PC-9 (cell line): ENCODE measurements at regions of chr17 and their contacts with region 1.

Region 1: DNA sequence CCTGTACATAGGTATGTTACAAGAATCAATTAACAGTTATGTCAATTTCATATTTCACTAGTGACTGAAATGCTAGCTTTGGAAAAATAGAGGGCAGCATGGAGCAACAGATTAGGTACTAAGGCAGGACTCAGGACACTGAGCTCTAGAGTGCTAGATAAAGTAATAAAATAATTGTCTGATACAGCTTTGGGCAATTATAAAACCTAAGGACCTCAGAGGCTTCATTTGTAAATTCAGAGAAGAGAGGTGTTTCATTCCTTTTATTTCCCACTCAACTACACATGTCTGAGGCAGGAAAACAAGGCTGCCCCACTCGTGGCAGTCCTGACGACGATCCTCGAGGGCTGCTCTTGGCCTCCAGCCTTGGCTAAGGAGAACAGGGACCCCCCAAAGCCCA is 81.5 kb downstream of the CA4 start:
- DNase-seq: no peak
- H3K4me3 ChIP-seq: no peak overlapping the region
- H3K27ac ChIP-seq: no peak overlapping the region
- H3K4me1 ChIP-seq: no peaks in the 10 kb centered on the region
- H3K27me3 ChIP-seq: no peaks in the 10 kb centered on the region
- CTCF ChIP-seq: peak; percentile 67

Region 2: GRCh38 chr17:60129170-60129569 is 102.1 kb before region 1 on chr17:
- CTCF ChIA-PET with region 1: interaction called, 10 read pairs
- POLR2A ChIA-PET with region 1: no interaction called
- intact Hi-C with region 1: no loop called
- DNase-seq: no peak
- H3K4me3 ChIP-seq: no peak overlapping the region
- H3K27ac ChIP-seq: no peak overlapping the region
- H3K4me1 ChIP-seq: peaks cover 3% of the 10 kb centered on the region; the same call in 1 of the 2 replicates
- H3K27me3 ChIP-seq: no peaks in the 10 kb centered on the region
- CTCF ChIP-seq: no peak

Region 3: GRCh38 chr17:60249290-60249826 is 18.1 kb after region 1 on chr17:
- CTCF ChIA-PET with region 1: interaction called, 13 read pairs
- POLR2A ChIA-PET with region 1: no interaction called
- intact Hi-C with region 1: no loop called
- DNase-seq: no peak
- H3K4me3 ChIP-seq: no peak overlapping the region
- H3K27ac ChIP-seq: no peak overlapping the region
- H3K4me1 ChIP-seq: no peaks in the 10 kb centered on the region
- H3K27me3 ChIP-seq: no peaks in the 10 kb centered on the region
- CTCF ChIP-seq: no peak

Region 4: GRCh38 chr17:60435244-60436167 is 204.3 kb after region 1 on chr17:
- CTCF ChIA-PET with region 1: interaction called, 7 read pairs
- POLR2A ChIA-PET with region 1: no interaction called
- intact Hi-C with region 1: loop called (anchors 10 kb)
- DNase-seq: peak; percentile 55 to 72
- H3K4me3 ChIP-seq: no peak overlapping the region
- H3K27ac ChIP-seq: no peak overlapping the region
- H3K4me1 ChIP-seq: no peaks in the 10 kb centered on the region
- H3K27me3 ChIP-seq: no peaks in the 10 kb centered on the region
- CTCF ChIP-seq: peak; percentile 98

Region 5: DNA sequence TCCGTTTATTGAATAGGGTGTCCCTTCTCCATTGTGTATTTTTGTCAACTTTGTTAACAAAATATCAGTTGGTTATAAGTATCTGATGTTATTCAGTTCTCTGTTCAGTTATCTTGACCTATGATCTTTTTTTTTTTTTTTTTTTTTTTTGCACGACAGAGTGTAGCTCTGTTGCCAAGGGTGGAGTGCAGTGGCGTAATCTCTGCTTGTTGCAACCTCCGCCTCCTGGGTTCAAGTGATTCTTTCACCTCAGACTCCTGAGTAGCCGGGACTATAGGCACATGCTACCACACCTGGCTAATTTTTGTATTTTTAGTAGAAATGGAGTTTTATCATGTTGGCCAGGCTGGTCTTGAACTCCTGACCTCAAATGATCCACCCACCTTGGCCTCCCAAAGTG is 662.2 kb after region 1 on chr17:
- CTCF ChIA-PET with region 1: interaction called, 11 read pairs
- POLR2A ChIA-PET with region 1: no interaction called
- intact Hi-C with region 1: no loop called
- DNase-seq: no peak
- H3K4me3 ChIP-seq: no peak overlapping the region
- H3K27ac ChIP-seq: no peak overlapping the region
- H3K4me1 ChIP-seq: no peaks in the 10 kb centered on the region
- H3K27me3 ChIP-seq: no peaks in the 10 kb centered on the region
- CTCF ChIP-seq: no peak